Heart left ventricle (tissue), 16 donors: ENCODE measurements at regions of chr1 and their contacts with region 1.

Region 1: DNA sequence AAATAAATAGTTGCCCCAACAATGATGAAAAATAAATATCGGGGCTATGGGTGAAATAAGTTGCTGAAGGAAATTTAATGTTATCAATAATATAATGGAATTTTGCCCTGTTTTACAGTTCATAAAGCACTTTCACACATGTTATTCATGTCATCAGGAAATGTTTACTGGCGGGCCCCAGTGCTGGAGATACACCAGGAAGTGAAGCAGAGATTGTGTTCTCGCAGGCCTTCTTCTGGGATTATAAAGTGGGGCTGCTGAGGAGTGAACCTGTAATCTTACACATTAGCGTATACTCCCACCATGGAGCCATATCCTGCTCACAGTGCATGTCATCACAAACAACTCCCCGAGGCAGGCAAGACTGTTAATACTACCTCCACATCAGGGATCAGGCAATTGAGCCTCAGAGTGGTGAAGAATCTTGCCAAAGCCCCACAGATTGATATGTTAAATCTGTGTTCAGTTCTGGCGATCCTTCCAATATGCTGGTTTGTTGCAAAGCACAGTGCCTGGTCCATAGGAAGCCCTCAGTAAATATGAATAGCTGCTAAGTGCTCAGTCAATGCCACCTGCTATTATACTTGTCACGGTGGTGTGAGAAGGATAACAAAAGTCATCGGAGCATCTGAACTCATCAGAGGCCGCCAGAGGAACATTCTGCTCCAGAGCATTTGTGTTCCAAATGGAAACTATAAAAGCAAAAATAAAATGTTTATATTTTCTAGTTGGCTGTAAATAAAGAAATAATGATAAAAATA is 104.4 kb upstream of the UBE2U start:
- DNase-seq: no peak
- ATAC-seq: peak; percentile 61 to 75 (median 64)
- H3K4me3 ChIP-seq: no peak overlapping the region
- H3K27ac ChIP-seq: peak overlapping the region in 6 of 12 donors; percentile 7 to 52 (median 34)
- H3K4me1 ChIP-seq: peaks cover 0 to 17% (median 7%) of the 10 kb centered on the region in 12 donors
- H3K27me3 ChIP-seq: no peaks in the 10 kb centered on the region
- CTCF ChIP-seq: no peak
- POLR2A ChIP-seq: no peak

Region 2: DNA sequence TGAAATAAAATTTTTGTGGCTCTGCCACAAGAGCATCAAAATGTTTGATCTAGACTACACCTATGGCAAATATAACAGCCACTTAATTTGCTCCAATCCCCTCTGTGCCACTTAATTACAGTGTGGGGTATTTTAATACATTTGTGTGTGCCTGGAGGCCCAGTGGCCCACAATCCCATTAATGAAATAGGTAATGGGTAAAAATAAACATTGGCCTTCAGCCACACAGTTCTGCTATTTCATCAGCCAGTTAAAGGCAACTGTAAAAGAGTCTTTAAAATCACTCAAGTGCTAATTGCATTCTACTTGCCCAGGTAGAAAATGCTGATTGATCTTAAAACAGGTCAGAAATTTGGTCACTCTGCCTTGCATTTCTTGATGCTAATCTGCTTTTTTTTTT is 47.2 kb before region 1 on chr1:
- intact Hi-C with region 1: loop called in 1 of 10 experiments (anchors 5 kb)
- DNase-seq: no peak
- ATAC-seq: peak in 3 of 4 donors; percentile 59 to 71 (median 68)
- H3K4me3 ChIP-seq: no peak overlapping the region
- H3K27ac ChIP-seq: peak overlapping the region in 8 of 12 donors; percentile 1 to 70 (median 30)
- H3K4me1 ChIP-seq: peaks cover 0 to 33% (median 5%) of the 10 kb centered on the region in 12 donors
- H3K27me3 ChIP-seq: no peaks in the 10 kb centered on the region
- CTCF ChIP-seq: no peak
- POLR2A ChIP-seq: no peak

Region 3: DNA sequence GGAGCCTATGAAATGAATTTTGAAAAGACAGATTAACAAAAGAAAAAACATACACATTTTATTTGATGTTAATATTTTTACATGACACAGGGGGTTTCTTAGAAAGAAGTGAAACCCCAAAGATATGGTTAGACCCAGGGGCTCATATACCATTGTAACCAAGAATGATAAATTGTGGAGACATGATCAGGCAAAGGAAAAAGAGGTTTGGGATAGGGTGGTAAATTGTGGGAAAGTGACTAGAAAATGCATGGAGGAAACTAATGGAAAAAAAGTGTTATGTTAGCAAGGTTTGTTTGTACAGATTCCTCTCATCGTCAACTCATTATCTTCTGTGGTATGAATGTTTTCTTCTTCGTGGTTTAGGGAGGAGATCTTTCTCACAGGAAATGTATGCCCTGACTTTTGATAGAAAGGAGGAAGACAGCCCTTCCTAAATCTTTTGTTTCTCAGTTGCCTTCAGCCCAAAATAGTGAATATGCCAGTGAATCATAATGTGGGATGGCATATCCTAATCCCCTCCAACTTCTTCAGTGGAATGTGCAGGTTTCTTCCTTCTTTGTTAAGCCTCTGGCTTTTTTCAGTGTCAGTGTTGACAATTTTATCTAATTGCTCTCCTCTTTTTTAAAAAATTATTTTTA is 36.0 kb before region 1 on chr1:
- intact Hi-C with region 1: no loop called
- DNase-seq: no peak
- ATAC-seq: no peak
- H3K4me3 ChIP-seq: no peak overlapping the region
- H3K27ac ChIP-seq: no peak overlapping the region
- H3K4me1 ChIP-seq: peaks cover 0 to 23% (median 0%) of the 10 kb centered on the region in 12 donors
- H3K27me3 ChIP-seq: no peaks in the 10 kb centered on the region
- CTCF ChIP-seq: no peak
- POLR2A ChIP-seq: no peak

Region 4: DNA sequence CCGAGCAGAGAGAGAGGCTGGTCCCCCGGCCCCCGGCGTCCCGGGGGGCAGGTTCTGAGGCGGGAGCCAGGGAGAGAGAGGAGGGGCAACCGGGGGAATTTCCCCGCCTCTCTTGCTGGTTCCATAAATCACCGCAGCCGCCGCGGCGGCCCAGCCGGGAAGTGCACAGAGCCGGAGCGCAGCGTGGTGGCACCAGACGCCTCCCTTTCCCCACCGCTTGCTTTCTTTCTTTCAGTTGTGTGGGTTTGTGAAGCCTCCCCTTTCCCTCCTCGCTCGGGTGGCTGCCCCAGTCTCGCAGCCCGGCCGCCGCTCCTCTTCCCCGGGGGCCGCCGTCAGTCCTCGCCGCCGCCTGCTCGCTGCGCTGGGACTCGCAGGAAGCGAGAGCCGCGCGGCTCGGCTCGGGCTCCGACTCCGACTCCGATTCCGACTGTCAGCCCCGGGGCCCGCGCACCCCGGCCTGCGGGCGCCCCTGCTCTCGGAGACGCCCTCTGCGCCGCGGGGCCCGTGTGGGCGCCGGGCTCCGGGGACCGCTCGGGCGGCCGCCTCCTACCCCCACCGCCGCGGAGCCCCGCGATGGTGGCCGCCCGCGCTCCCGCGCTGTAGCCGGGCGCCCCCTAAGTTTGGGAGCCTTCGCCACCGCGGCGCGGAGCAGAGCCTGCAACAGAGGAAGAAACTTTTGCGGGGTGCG is 371.1 kb after region 1 on chr1 and contains the start of gene CACHD1:
- intact Hi-C with region 1: no loop called
- DNase-seq: peak; percentile 79 to 85 (median 80)
- ATAC-seq: peak; percentile 59 to 90 (median 87)
- H3K4me3 ChIP-seq: peak within 1 kb of the TSS; percentile 64 to 90 (median 74)
- H3K27ac ChIP-seq: peak within 1 kb of the TSS; percentile 58 to 87 (median 81)
- H3K4me1 ChIP-seq: peaks cover 1 to 30% (median 10%) of the 10 kb centered on the region in 12 donors
- H3K27me3 ChIP-seq: peaks cover 0 to 41% (median 0%) of the 10 kb centered on the region in 9 donors
- CTCF ChIP-seq: peak in 10 of 12 donors; percentile 26 to 71 (median 48)
- POLR2A ChIP-seq: peak in 1 of 2 donors; percentile 62
- total RNA-seq, gene CACHD1: 1.3 to 10.0 (median 2.6) TPM